HCT116 (cell line): ENCODE measurements at regions of chrX and their contacts with region 1.

Region 1: DNA sequence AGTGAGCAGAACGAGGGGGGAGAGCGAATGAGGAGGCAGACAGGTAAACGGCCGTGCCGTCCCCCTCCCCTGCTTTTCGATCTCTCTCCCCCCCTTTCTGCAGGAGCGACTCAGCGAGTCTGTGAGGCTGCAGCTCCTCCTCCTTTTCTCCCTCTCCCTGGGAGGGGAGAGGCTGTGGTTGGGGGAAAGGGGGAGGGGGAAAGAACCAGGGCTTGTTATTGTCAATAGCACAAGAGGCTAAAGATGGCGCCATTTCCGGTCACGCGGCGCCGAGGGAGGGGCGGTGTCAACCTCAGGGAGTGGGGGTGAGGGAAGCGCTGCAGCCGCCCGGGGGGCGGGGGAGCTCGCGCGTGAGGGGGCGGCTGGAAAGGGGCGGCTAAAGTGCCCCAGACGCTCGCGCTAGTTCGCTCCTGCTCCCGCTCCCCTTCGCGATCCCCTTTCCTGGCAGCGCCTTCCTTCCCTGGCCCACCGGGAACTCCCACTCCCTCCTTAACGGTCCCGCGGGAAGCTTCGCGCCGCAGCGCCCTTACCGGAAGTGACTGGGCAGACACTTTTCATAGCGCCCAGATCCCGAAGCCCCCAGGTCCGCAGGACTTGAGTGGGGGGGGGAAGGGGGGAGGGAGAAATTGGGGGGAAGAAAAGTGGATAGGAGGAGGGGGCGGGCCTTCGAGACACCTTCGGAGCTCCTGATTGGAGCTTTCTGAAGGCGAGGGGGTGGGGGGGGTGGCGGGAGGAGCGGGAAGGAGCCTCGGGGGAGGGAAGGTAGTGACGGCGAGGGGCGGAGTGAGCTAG is at the start of gene CUL4B:
- DNase-seq: peak; percentile 86
- ATAC-seq: peak; percentile 84
- H3K4me3 ChIP-seq: peak within 1 kb of the TSS; percentile 63 to 74
- H3K27ac ChIP-seq: peak within 1 kb of the TSS; percentile 91
- H3K4me1 ChIP-seq: peaks cover 3 to 18% of the 10 kb centered on the region in 2 experiments
- H3K27me3 ChIP-seq: no peaks in the 10 kb centered on the region
- CTCF ChIP-seq: no peak
- POLR2A ChIP-seq: no peak
- RAD21 ChIP-seq: no peak
- total RNA-seq, gene CUL4B: 54.1 TPM

Region 2: GRCh38 chrX:119638725-119639471 is 922.1 kb before region 1 on chrX:
- CTCF ChIA-PET with region 1: no interaction called
- POLR2A ChIA-PET with region 1: no interaction called
- RAD21 ChIA-PET with region 1: no interaction called
- intact Hi-C with region 1: no loop called
- DNase-seq: no peak
- ATAC-seq: no peak
- H3K4me3 ChIP-seq: no peak overlapping the region
- H3K27ac ChIP-seq: no peak overlapping the region
- H3K4me1 ChIP-seq: no peaks in the 10 kb centered on the region
- H3K27me3 ChIP-seq: no peaks in the 10 kb centered on the region
- CTCF ChIP-seq: no peak
- POLR2A ChIP-seq: no peak
- RAD21 ChIP-seq: no peak

Region 3: GRCh38 chrX:120549483-120550452 is 11.3 kb before region 1 on chrX:
- CTCF ChIA-PET with region 1: interaction called, 5 read pairs
- POLR2A ChIA-PET with region 1: interaction called, 10 read pairs
- RAD21 ChIA-PET with region 1: no interaction called
- intact Hi-C with region 1: no loop called
- DNase-seq: peak; percentile 83
- ATAC-seq: peak; percentile 82
- H3K4me3 ChIP-seq: peak overlapping the region; percentile 24 to 53
- H3K27ac ChIP-seq: peak overlapping the region; percentile 99
- H3K4me1 ChIP-seq: peaks cover 40 to 53% of the 10 kb centered on the region in 2 experiments
- H3K27me3 ChIP-seq: no peaks in the 10 kb centered on the region
- CTCF ChIP-seq: no peak
- POLR2A ChIP-seq: no peak
- RAD21 ChIP-seq: 0 out of 2 replicates have a peak, but pooled peaks have one; percentile 8

Region 4: DNA sequence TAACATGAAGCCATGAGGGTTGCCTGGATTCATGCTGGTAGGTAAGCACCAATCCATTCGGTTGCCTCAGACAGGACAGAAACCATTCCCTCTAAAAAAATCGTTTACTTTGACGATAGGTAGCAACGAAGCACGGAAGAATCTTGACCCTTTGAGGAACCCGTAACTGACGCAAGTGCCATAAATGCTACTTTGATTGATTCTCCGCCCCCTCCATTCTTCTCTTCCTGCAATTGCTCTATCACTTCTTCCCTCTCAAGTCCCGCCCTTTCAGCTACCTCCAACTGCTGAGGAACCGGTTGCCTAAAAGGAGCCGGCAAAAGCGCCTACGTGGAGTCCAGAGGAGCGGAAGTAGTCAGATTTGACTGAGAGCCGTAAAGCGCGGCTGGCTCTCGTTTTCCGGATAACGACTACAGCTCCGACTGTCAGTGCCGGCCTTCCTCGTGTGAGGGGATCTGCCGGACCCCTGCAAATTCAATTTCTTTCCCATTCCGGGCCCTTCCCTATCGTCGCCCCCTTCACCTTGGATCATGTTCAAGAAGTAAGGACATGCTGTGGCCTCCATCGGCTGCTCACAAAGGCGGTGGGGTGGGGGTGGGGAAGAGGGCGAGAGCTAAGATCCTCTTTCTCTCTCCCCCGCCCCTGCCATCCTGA is 42.8 kb after region 1 on chrX and contains the start of gene MCTS1:
- CTCF ChIA-PET with region 1: no interaction called
- POLR2A ChIA-PET with region 1: interaction called, 15 read pairs
- RAD21 ChIA-PET with region 1: interaction called in 1 of 2 experiments, 3 read pairs
- intact Hi-C with region 1: loop called (anchors 1 kb)
- DNase-seq: peak; percentile 95
- ATAC-seq: peak; percentile 98
- H3K4me3 ChIP-seq: peak within 1 kb of the TSS; percentile 80 to 87
- H3K27ac ChIP-seq: peak within 1 kb of the TSS; percentile 84
- H3K4me1 ChIP-seq: peaks cover 4 to 5% of the 10 kb centered on the region in 2 experiments; a peak in 2 of 4 replicates
- H3K27me3 ChIP-seq: no peaks in the 10 kb centered on the region
- CTCF ChIP-seq: no peak
- POLR2A ChIP-seq: no peak
- RAD21 ChIP-seq: 0 out of 2 replicates have a peak, but pooled peaks have one; percentile 9
- total RNA-seq, gene MCTS1: 49.5 TPM

Region 5: DNA sequence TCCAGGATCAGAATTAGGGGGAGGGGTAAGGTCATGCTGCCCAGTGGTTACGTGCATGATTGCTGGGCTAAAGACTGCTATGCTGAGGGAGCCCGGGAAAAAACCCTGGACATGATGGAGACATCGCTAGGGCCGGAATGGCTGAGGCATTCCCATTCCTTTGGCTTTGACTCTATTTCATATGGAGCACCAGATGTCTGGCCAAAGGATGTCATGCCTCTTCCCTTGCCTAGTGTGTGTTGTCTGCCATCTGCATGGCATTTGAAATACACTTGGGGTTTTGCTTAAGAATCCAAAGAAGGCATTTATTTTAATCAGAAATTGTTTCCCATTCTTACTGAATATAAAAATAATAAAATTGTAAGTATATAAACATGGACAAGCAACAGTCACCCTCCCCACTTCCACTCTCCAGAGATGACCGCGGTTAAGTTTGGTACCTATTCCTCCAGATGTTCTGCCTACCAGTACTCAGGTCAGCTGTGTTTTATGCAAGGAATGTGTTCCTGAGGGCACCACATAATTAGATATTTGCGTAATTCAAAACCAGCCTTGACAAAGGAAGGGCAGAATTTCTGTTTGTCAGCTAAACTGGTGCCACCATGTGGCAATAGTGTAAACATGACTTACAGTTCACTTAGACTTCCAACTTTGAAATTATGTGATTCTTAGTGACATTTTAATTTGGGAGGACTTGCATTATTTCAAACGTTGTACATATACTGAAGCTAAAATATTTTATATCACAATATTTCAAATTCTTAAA is 208.7 kb after region 1 on chrX:
- CTCF ChIA-PET with region 1: no interaction called
- POLR2A ChIA-PET with region 1: no interaction called
- RAD21 ChIA-PET with region 1: no interaction called
- intact Hi-C with region 1: no loop called
- DNase-seq: peak; percentile 16
- ATAC-seq: peak; percentile 69; the same call in 1 of the 2 replicates
- H3K4me3 ChIP-seq: no peak overlapping the region
- H3K27ac ChIP-seq: no peak overlapping the region
- H3K4me1 ChIP-seq: 0 out of 4 replicates have a peak, but pooled peaks cover 0 to 4% of the 10 kb centered on the region in 2 experiments
- H3K27me3 ChIP-seq: no peaks in the 10 kb centered on the region
- CTCF ChIP-seq: peak; percentile 30 to 45 (median 45); a peak in 4 of 6 replicates
- POLR2A ChIP-seq: no peak
- RAD21 ChIP-seq: peak; percentile 62